GM13976 (cell line): ENCODE measurements at regions of chr12 and their contacts with region 1.

Region 1: GRCh38 chr12:130031571-130032189 is 127.9 kb upstream of the TMEM132D start:
- DNase-seq: peak; percentile 75
- CTCF ChIP-seq: peak; percentile 89

Region 2: GRCh38 chr12:130747867-130748740 is 716.4 kb after region 1 on chr12:
- in situ Hi-C with region 1: loop called (anchors 25 kb)
- DNase-seq: peak; percentile 79
- CTCF ChIP-seq: peak; percentile 93